ENCODE measurements at regions of chr14 and their contacts with region 1.

Region 1: DNA sequence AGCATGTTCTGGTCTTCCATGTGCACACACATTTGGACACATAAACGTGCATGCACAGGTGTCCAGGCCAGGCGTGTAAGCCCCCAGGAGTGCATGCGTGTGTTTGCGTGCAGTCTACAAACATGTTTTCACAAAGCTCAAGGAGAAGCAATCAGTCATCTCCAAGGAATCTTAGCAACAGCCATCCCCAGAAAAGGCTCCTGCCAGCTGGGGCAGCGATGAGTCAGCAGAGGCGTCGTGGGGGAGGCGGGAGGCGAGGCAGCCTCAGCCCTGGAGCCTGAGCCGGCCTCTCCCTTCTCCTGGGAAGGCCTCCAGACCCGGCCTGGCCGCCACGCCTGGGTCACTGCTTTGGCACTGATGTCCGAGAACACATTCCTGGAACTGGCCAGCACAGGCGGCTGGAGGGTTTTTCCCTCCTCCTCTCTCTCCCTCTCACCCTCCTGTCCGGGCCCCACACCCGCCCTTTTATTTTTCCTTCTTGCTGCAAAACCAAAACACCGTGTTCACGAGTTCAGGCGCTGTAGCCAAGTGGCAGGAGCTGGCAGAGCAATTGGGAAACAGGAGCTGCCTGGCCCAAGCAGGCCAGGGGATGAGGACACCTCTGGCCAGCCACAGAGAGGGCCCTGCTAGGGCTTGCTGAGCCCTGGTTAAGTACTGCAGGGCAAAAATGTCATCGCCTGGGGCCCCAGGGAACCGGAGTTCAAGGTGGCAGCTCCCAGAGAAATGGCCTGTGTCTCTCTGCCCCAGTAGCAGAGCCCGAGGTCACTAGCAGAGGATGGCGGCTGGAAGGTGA is 92.7 kb downstream of the LRRC74A start:
- DNase-seq: peak; percentile 98
- H3K4me3 Mint-ChIP-seq: peak overlapping the region; percentile 57
- H3K27ac Mint-ChIP-seq: peak overlapping the region; percentile 93
- H3K4me1 Mint-ChIP-seq: peaks cover 36% of the 10 kb centered on the region
- H3K27me3 Mint-ChIP-seq: no peaks in the 10 kb centered on the region
- CTCF ChIP-seq: no peak

Region 2: GRCh38 chr14:76929927-76930326 is 11.0 kb after region 1 on chr14:
- CTCF ChIA-PET with region 1: interaction called, 11 read pairs
- POLR2A ChIA-PET with region 1: interaction called, 22 read pairs
- intact Hi-C with region 1: no loop called
- DNase-seq: no peak
- H3K4me3 Mint-ChIP-seq: no peak overlapping the region
- H3K27ac Mint-ChIP-seq: no peak overlapping the region
- H3K4me1 Mint-ChIP-seq: no peaks in the 10 kb centered on the region
- H3K27me3 Mint-ChIP-seq: no peaks in the 10 kb centered on the region
- CTCF ChIP-seq: no peak

Region 3: GRCh38 chr14:76947078-76947837 is 28.3 kb after region 1 on chr14:
- CTCF ChIA-PET with region 1: interaction called, 16 read pairs
- POLR2A ChIA-PET with region 1: interaction called, 120 read pairs
- intact Hi-C with region 1: no loop called
- DNase-seq: peak; percentile 88
- H3K4me3 Mint-ChIP-seq: peak overlapping the region; percentile 31
- H3K27ac Mint-ChIP-seq: peak overlapping the region; percentile 94
- H3K4me1 Mint-ChIP-seq: peaks cover 28% of the 10 kb centered on the region
- H3K27me3 Mint-ChIP-seq: no peaks in the 10 kb centered on the region
- CTCF ChIP-seq: peak; percentile 31

Region 4: GRCh38 chr14:77028384-77029231 is 109.7 kb after region 1 on chr14 and contains the start of gene IRF2BPL:
- CTCF ChIA-PET with region 1: interaction called, 56 read pairs
- POLR2A ChIA-PET with region 1: interaction called, 257 read pairs
- intact Hi-C with region 1: loop called (anchors 1 kb)
- DNase-seq: peak; percentile 98
- H3K4me3 Mint-ChIP-seq: peak within 1 kb of the TSS; percentile 81
- H3K27ac Mint-ChIP-seq: peak within 1 kb of the TSS; percentile 88
- H3K4me1 Mint-ChIP-seq: peaks cover 28% of the 10 kb centered on the region
- H3K27me3 Mint-ChIP-seq: no peaks in the 10 kb centered on the region
- CTCF ChIP-seq: no peak
- total RNA-seq, gene IRF2BPL: 22.1 and 26.0 TPM in 2 replicates

Region 5: DNA sequence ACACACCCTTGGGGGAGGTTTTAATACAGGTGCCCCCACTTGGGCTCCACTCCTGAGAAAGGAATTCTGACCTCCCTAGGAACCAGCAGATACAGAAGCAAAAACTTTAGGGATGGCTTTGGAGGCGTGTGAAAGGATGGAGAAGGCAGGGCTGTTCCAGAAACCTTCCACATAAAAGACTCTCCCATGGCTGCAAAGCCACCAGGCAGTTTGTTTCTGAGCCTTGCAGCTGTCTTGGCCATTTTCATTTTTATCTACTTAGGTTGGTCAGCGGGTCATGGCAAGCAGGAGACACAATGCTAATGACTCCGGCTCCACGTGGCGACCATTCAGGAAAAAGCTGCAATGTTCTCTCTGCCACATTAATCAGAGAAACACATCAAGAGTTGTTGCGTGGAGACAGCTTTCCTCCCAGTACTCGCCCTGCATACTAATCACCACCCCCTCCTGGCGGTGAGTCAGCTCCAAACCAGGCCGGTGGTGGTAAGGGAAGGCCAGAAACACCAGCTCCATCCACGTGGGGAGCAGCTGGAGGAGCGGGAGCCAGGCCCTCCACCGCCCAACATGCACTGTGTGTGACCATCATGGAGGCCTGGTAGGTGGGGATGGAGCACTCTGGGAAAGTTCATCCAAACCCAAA is 140.4 kb after region 1 on chr14:
- CTCF ChIA-PET with region 1: interaction called, 496 read pairs
- POLR2A ChIA-PET with region 1: interaction called, 17 read pairs
- intact Hi-C with region 1: no loop called
- DNase-seq: peak; percentile 83
- H3K4me3 Mint-ChIP-seq: no peak overlapping the region
- H3K27ac Mint-ChIP-seq: peak overlapping the region; percentile 78
- H3K4me1 Mint-ChIP-seq: peaks cover 12% of the 10 kb centered on the region
- H3K27me3 Mint-ChIP-seq: no peaks in the 10 kb centered on the region
- CTCF ChIP-seq: peak; percentile 15

Region 6: DNA sequence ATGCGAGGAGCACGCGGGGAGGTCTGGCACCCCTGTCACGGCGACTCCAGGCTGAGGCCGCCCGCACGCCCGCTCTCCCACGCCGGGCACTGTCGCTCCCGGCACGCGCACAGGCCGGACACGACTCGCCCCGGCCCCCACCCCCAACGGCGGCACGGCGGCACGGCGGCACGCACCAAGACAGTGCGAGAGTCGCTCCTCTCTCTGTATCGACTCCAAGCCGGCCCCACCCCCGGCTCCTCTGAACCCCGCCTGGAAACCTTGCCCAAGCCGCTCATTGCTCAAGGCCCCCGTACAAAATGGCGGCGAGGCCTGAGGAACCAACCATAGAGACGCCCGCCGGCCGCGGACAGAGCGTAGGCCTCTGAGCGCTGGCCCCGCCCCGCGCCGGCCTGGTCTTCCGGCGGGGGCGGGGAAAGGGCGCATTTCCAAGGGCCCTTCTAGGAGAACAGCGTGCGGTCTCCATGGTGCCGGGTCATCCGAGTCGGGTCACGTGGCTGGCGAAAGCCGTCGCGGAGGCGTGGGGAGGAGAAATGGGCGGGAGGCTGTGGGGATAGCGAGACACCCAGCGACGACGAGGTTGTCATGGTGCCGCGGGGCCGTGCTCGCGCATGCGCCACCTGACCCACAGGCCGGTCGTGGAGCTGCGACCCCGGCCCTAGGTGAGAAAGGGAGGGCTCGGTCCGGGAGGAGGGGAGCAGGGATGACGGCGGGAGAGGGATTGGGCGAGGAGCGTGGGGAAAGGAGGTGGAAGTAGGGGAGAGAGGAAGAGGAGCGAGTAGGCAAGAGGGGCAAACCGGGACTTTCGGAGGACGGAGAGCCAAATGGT is 179.0 kb after region 1 on chr14 and contains the start of gene CIPC:
- CTCF ChIA-PET with region 1: interaction called, 13 read pairs
- POLR2A ChIA-PET with region 1: interaction called, 31 read pairs
- intact Hi-C with region 1: loop called (anchors 1 kb)
- DNase-seq: peak; percentile 99
- H3K4me3 Mint-ChIP-seq: peak within 1 kb of the TSS; percentile 98
- H3K27ac Mint-ChIP-seq: peak within 1 kb of the TSS; percentile 99
- H3K4me1 Mint-ChIP-seq: peaks cover 43% of the 10 kb centered on the region
- H3K27me3 Mint-ChIP-seq: no peaks in the 10 kb centered on the region
- CTCF ChIP-seq: no peak
- total RNA-seq, gene CIPC: 9.7 and 11.4 TPM in 2 replicates